ENCODE measurements at regions of chr9 and their contacts with region 1.

Region 1: DNA sequence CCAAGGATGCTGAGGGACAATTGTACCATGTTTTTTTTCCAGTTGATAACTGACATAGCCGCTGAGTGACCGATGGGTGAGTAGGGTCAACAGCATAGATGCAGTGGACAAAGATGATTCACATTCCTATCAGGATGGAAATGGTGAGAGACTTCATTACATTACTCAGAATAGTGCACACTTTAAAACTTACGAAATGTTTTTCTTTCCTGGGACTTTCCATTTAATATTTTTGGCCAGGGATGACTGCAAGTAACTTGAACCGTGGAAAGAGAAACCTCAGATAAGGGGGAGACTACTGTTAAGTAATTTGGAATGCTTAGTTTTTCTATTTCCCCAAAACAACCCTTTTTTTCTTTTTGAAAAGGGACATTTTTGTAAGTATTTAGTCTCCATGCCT is 3.0 kb upstream of the TUSC1 start:
- DNase-seq: no peak
- ATAC-seq: no peak
- H3K4me3 ChIP-seq: no peak overlapping the region
- H3K4me3 Mint-ChIP-seq: no peak overlapping the region
- H3K27ac ChIP-seq: no peak overlapping the region
- H3K27ac Mint-ChIP-seq: no peak overlapping the region
- H3K4me1 ChIP-seq: peaks cover 4% of the 10 kb centered on the region
- H3K4me1 Mint-ChIP-seq: no peaks in the 10 kb centered on the region
- H3K27me3 ChIP-seq: no peaks in the 10 kb centered on the region
- H3K27me3 Mint-ChIP-seq: peaks cover 4 to 5% of the 10 kb centered on the region in 2 donors
- CTCF ChIP-seq: no peak

Region 2: DNA sequence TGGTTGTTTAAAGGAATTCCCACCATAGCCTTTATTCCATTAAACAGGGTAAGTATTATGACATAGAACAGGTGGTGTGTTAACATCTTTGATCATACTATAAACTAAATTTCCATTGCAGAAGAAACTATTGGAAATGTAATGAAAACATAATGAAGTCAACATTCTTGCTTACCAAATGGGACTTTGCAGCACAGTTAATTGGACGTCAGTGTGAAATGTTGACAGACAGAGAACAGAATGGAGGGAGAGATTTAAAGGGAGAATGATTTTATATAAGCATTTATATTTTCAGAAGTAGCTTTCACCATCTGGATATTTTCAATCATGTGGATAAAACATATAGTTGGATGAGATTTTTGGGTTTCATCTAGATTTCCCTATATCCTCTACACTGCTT is 314.4 kb before region 1 on chr9:
- intact Hi-C with region 1: no loop called
- DNase-seq: no peak
- ATAC-seq: no peak
- H3K4me3 ChIP-seq: no peak overlapping the region
- H3K4me3 Mint-ChIP-seq: no peak overlapping the region
- H3K27ac ChIP-seq: no peak overlapping the region
- H3K27ac Mint-ChIP-seq: no peak overlapping the region
- H3K4me1 ChIP-seq: no peaks in the 10 kb centered on the region
- H3K4me1 Mint-ChIP-seq: no peaks in the 10 kb centered on the region
- H3K27me3 ChIP-seq: no peaks in the 10 kb centered on the region
- H3K27me3 Mint-ChIP-seq: no peaks in the 10 kb centered on the region
- CTCF ChIP-seq: no peak

Region 3: DNA sequence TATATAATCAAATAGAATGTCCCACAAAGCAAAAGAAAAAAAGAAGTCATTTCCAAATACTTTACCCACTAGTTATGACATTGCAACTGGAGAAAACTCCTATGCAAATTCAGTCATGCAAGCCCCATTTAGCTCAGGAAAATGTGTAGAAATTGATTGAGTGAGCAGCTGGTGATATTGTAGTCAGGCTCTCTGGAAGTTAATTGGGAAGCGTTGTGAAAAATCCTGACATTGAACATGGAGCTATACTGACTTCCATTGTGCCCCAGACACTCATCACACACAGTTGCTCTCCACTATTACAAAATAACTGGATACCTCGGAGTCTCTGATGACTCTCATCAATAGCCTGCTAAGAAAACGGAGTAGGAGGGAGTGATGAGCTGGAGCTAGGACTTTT is 52.0 kb before region 1 on chr9:
- intact Hi-C with region 1: loop called (anchors 10 kb)
- DNase-seq: no peak
- ATAC-seq: no peak
- H3K4me3 ChIP-seq: no peak overlapping the region
- H3K4me3 Mint-ChIP-seq: no peak overlapping the region
- H3K27ac ChIP-seq: no peak overlapping the region
- H3K27ac Mint-ChIP-seq: no peak overlapping the region
- H3K4me1 ChIP-seq: no peaks in the 10 kb centered on the region
- H3K4me1 Mint-ChIP-seq: no peaks in the 10 kb centered on the region
- H3K27me3 ChIP-seq: no peaks in the 10 kb centered on the region
- H3K27me3 Mint-ChIP-seq: no peaks in the 10 kb centered on the region
- CTCF ChIP-seq: no peak

Measured in natural killer cell (primary cell).